ENCODE measurements at regions of chr1 and their contacts with region 1.

Region 1: GRCh38 chr1:41416552-41417334 is 55.5 kb downstream of the FOXO6 start:
- DNase-seq: peak; percentile 67

Region 2: GRCh38 chr1:41135196-41135947 is 281.4 kb before region 1 on chr1:
- in situ Hi-C with region 1: no loop called
- DNase-seq: no peak

Region 3: DNA sequence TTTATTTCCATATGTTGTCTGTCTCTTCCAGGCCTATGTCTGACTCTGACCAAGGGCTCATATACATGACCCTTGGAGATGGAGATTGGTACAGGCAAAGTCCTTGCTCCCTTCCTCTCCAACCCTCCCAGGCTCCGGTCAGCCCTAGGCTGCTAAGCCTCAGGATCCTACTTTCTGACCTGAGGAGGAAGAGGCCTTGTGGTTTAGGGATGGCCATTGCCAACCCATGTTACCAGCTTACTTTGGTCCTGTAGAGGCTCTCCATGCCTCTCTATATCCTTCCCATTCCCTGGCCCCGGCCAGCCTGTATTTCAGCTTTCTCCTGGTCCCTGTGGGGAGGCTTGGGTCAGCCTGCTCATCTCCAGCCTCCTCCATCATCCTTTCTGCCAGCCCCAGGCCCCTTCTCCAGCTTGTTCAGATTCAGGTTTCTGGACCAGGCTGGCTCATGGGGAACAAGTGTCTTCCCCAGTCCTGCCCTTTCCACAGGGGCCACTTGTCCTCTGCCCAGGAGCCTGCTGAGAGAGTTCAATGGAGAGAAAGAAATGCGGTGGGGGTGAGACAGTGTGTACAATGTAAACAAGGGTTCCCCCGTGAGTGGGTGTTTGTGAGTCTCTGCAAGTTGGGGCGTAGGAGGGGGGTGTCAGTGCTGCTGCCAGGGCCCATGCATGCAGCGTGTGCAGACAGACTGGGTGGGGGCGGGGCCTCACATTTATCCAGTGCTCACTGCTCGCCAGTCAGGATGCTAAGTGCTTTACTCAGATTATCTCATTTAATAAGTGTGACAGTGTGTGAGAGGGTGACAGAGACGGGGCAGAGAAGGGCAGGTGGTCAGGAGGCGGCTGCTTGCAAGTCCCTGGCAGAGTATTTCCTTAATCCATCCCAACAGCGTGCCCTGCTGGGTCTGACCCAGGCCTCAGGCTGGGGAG is 86.8 kb before region 1 on chr1:
- in situ Hi-C with region 1: loop called (anchors 5 kb)
- DNase-seq: peak; percentile 18

Region 4: GRCh38 chr1:41484372-41485241 is 67.9 kb after region 1 on chr1 and contains the start of gene EDN2:
- in situ Hi-C with region 1: no loop called
- DNase-seq: peak; percentile 66
- total RNA-seq, gene EDN2: 1.8 and 2.2 TPM in 2 replicates